ENCODE measurements at regions of chr13 and their contacts with region 1.

Region 1: GRCh38 chr13:97212601-97213040 is 9.5 kb upstream of the MBNL2 start:
- DNase-seq: no peak
- H3K4me3 ChIP-seq: no peak overlapping the region
- H3K27me3 ChIP-seq: no peaks in the 10 kb centered on the region
- CTCF ChIP-seq: peak; percentile 82

Region 2: GRCh38 chr13:97191615-97192014 is 21.0 kb before region 1 on chr13:
- CTCF ChIA-PET with region 1: interaction called, 10 read pairs
- POLR2A ChIA-PET with region 1: no interaction called
- DNase-seq: no peak
- H3K4me3 ChIP-seq: no peak overlapping the region
- H3K27me3 ChIP-seq: no peaks in the 10 kb centered on the region
- CTCF ChIP-seq: no peak

Region 3: DNA sequence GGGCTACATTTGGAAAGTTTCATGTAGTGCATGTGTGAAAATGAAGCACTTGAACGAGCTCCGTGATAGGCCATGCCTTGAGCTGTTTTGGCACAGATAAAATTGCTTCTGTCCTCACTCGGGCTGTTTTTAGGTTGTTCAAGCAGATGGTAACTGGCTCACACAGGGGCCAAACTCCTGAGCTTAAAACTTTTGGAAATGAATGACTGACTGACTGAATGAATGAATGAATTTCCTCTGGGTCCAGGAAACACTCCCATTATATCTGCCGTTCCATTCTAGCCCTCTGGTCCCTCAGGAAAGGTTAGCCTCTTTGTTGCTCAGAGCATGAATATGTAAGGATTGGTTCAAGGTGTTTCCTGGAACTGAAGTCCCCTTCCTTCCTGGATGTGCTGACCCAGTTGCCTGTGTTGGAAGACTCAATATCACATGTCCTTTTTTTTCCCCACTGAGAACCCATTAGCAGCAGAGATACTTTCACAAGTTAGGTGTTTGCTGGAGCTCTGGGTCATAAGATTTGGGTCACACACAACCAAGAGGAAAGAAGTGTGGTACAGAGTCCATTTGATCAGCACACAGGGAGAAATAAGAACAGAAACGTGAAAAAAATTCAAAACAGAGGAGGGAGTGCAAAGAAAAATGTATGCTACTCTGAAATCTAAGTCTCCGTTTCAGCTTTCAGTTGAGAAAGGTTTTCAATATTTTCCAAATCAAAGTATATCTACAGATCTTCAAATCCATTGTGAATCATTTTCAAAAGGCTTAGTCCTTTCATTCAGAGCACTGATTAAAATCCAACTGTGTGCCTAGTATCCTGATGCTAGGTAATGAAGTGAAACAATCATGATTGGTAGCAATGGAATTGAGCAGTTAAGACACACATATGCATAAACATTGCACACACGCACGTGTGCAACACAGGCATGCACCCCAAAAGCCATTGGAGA is 28.4 kb after region 1 on chr13:
- CTCF ChIA-PET with region 1: no interaction called
- POLR2A ChIA-PET with region 1: no interaction called
- DNase-seq: no peak
- H3K4me3 ChIP-seq: no peak overlapping the region
- H3K27me3 ChIP-seq: no peaks in the 10 kb centered on the region
- CTCF ChIP-seq: no peak

Region 4: GRCh38 chr13:97319113-97319720 is 106.6 kb after region 1 on chr13:
- CTCF ChIA-PET with region 1: no interaction called
- POLR2A ChIA-PET with region 1: no interaction called
- DNase-seq: no peak
- H3K4me3 ChIP-seq: no peak overlapping the region
- H3K27me3 ChIP-seq: no peaks in the 10 kb centered on the region
- CTCF ChIP-seq: no peak

Region 5: GRCh38 chr13:97411984-97412383 is 199.4 kb after region 1 on chr13:
- CTCF ChIA-PET with region 1: no interaction called
- POLR2A ChIA-PET with region 1: no interaction called
- DNase-seq: no peak
- H3K4me3 ChIP-seq: no peak overlapping the region
- H3K27me3 ChIP-seq: no peaks in the 10 kb centered on the region; the same call in 1 of the 2 replicates
- CTCF ChIP-seq: no peak

Measured in BJ (cell line).